ENCODE measurements at regions of chr14 and their contacts with region 1.

Region 1: GRCh38 chr14:24114536-24115450 is at the starts of genes DCAF11 and NRL:
- DNase-seq: peak; percentile 99
- ATAC-seq: peak; percentile 92
- H3K4me3 ChIP-seq: peak within 1 kb of the TSS; percentile 96
- H3K27ac ChIP-seq: peak within 1 kb of the TSS; percentile 94
- H3K4me1 ChIP-seq: peaks cover 5% of the 10 kb centered on the region
- H3K27me3 ChIP-seq: no peaks in the 10 kb centered on the region
- CTCF ChIP-seq: no peak
- EP300 ChIP-seq: no peak
- POLR2A ChIP-seq: peak; percentile 91
- RAD21 ChIP-seq: no peak
- polyA plus RNA-seq, gene DCAF11: 13.4 to 16.4 TPM
- polyA plus RNA-seq, gene NRL: 0.11 to 0.13 TPM

Region 2: DNA sequence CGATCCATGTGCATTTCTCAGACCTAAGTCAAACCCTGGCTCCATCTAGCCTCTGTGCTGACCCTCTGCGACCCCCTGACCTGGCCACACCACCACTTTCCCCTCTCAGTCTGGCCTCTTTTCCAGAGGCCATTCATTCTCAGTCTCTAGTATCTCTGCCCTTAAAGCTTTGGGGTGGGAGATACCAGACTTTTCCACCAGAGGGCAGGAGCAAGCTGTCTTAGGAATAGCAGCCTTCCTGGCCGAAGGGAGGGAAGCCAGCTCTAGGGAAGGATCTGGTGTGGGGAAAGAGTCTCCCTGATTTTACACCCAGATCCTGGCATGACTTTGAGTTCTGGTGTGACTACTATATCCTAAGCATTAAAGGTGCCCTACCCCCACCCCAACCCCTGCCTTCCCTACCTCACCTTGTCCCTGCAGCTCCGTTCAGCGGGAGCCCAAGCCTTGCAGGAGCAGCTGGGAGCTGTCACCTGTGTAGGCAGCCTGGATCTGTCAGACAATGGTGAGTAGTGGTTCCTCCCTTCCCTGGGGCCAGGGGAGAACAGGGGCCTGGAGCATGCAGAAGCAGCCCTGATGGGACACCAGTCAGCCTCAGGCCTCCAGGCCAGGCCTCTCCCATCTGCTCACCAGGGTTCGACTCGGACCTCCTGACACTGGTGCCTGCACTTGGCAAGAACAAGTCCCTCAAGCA is 56.4 kb before region 1 on chr14:
- CTCF ChIA-PET with region 1: interaction called, 164 read pairs
- POLR2A ChIA-PET with region 1: interaction called, 5 read pairs
- RAD21 ChIA-PET with region 1: interaction called, 136 read pairs
- SMC1A ChIA-PET with region 1: interaction called, 122 read pairs
- in situ Hi-C with region 1: no loop called
- intact Hi-C with region 1: no loop called
- DNase-seq: no peak
- ATAC-seq: peak; percentile 86
- H3K4me3 ChIP-seq: no peak overlapping the region
- H3K27ac ChIP-seq: no peak overlapping the region
- H3K4me1 ChIP-seq: no peaks in the 10 kb centered on the region
- H3K27me3 ChIP-seq: no peaks in the 10 kb centered on the region; a peak in 1 of 4 replicates
- CTCF ChIP-seq: peak; percentile 66 to 85 (median 80)
- EP300 ChIP-seq: no peak
- POLR2A ChIP-seq: no peak
- RAD21 ChIP-seq: peak; percentile 94

Region 3: GRCh38 chr14:24093901-24094761 is 20.7 kb before region 1 on chr14 and contains the start of gene PCK2:
- CTCF ChIA-PET with region 1: interaction called, 294 read pairs
- POLR2A ChIA-PET with region 1: interaction called, 90 read pairs
- RAD21 ChIA-PET with region 1: interaction called, 153 read pairs
- SMC1A ChIA-PET with region 1: interaction called, 195 read pairs
- in situ Hi-C with region 1: no loop called
- intact Hi-C with region 1: loop called (anchors 1 kb)
- DNase-seq: no peak
- ATAC-seq: peak; percentile 79
- H3K4me3 ChIP-seq: peak within 1 kb of the TSS; percentile 98
- H3K27ac ChIP-seq: peak within 1 kb of the TSS; percentile 99
- H3K4me1 ChIP-seq: 0 out of 2 replicates have a peak, but pooled peaks cover 3% of the 10 kb centered on the region
- H3K27me3 ChIP-seq: no peaks in the 10 kb centered on the region
- CTCF ChIP-seq: no peak
- EP300 ChIP-seq: no peak
- POLR2A ChIP-seq: peak; percentile 91
- RAD21 ChIP-seq: no peak
- polyA plus RNA-seq, gene PCK2: 6.6 to 12.3 TPM

Region 4: GRCh38 chr14:24141097-24141880 is 26.5 kb after region 1 on chr14 and contains the start of gene EMC9:
- CTCF ChIA-PET with region 1: interaction called, 39 read pairs
- POLR2A ChIA-PET with region 1: interaction called, 276 read pairs
- RAD21 ChIA-PET with region 1: interaction called, 69 read pairs
- SMC1A ChIA-PET with region 1: interaction called, 70 read pairs
- in situ Hi-C with region 1: no loop called
- intact Hi-C with region 1: loop called (anchors 1 kb)
- DNase-seq: peak; percentile 97
- ATAC-seq: peak; percentile 92
- H3K4me3 ChIP-seq: peak within 1 kb of the TSS; percentile 94
- H3K27ac ChIP-seq: peak within 1 kb of the TSS; percentile 93
- H3K4me1 ChIP-seq: peaks cover 40% of the 10 kb centered on the region
- H3K27me3 ChIP-seq: no peaks in the 10 kb centered on the region
- CTCF ChIP-seq: peak in 2 of 3 experiments; percentile 27 to 35; a peak in 4 of 6 replicates
- EP300 ChIP-seq: peak in 1 of 2 experiments; percentile 58; a peak in 2 of 4 replicates
- POLR2A ChIP-seq: peak; percentile 94
- RAD21 ChIP-seq: no peak
- polyA plus RNA-seq, gene EMC9: 15.5 to 17.8 TPM

Region 5: DNA sequence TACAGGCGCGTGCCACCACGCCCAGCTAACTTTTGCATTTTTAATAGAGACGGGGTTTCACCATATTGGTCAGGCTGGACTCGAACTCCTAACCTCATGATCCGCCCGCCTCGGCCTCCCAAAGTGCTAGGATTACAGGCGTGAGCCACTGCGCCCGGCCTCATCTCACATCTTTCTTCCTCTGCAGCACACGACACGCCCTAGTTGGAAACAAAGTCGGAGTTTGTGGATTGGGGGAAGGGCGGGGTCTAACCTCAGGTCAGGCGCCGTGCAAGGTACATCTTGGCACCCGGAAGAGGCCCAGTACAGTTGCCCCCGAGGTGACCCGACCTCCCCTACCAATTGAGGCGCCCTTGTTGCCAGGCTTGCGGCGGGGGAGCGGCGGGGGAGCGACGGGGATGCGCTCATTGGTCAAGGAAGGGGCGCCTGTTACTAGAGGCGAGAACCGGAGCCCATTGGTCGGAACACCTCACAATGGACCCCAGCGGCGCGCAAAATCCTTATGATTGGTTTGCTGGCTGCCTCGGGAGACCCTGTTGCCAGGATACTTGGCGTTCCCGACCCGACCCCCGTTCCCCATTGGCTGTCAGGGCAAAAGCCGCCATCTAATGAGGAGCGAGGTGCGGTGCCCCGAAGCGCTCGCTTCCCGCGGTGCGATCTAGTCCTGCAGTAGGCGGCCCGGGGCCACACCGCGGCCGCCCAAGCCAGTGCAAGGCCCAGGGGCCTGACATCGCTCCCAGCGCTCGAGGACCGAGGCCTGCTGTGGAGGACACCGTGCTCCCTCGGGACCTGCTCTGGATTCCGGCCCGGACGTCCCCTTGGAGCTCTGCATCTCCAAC is 56.8 kb after region 1 on chr14 and contains the start of gene REC8:
- CTCF ChIA-PET with region 1: no interaction called
- POLR2A ChIA-PET with region 1: interaction called, 6 read pairs
- RAD21 ChIA-PET with region 1: no interaction called
- SMC1A ChIA-PET with region 1: no interaction called
- in situ Hi-C with region 1: no loop called
- intact Hi-C with region 1: loop called (anchors 2 kb)
- DNase-seq: peak; percentile 82
- ATAC-seq: peak; percentile 90
- H3K4me3 ChIP-seq: peak within 1 kb of the TSS; percentile 62
- H3K27ac ChIP-seq: peak within 1 kb of the TSS; percentile 68
- H3K4me1 ChIP-seq: no peaks in the 10 kb centered on the region
- H3K27me3 ChIP-seq: no peaks in the 10 kb centered on the region
- CTCF ChIP-seq: no peak
- EP300 ChIP-seq: no peak
- POLR2A ChIP-seq: peak; percentile 76
- RAD21 ChIP-seq: no peak
- polyA plus RNA-seq, gene REC8: 4.2 to 9.6 TPM